Calu3 (cell line): ENCODE measurements at regions of chr3 and their contacts with region 1.

Region 1: GRCh38 chr3:179562591-179563270 is at the start of gene ACTL6A:
- DNase-seq: peak; percentile 100
- H3K4me3 Mint-ChIP-seq: peak within 1 kb of the TSS; percentile 93
- H3K27ac Mint-ChIP-seq: peak within 1 kb of the TSS; percentile 95
- H3K4me1 Mint-ChIP-seq: peaks cover 23% of the 10 kb centered on the region
- H3K27me3 Mint-ChIP-seq: no peaks in the 10 kb centered on the region
- CTCF ChIP-seq: no peak
- total RNA-seq, gene ACTL6A: 148 and 158 TPM in 2 replicates

Region 2: GRCh38 chr3:179015551-179016020 is 547.1 kb before region 1 on chr3:
- CTCF ChIA-PET with region 1: no interaction called
- intact Hi-C with region 1: loop called (anchors 2 kb)
- DNase-seq: peak; percentile 78
- H3K4me3 Mint-ChIP-seq: no peak overlapping the region
- H3K27ac Mint-ChIP-seq: no peak overlapping the region
- H3K4me1 Mint-ChIP-seq: peaks cover 8% of the 10 kb centered on the region
- H3K27me3 Mint-ChIP-seq: no peaks in the 10 kb centered on the region
- CTCF ChIP-seq: peak; percentile 93

Region 3: DNA sequence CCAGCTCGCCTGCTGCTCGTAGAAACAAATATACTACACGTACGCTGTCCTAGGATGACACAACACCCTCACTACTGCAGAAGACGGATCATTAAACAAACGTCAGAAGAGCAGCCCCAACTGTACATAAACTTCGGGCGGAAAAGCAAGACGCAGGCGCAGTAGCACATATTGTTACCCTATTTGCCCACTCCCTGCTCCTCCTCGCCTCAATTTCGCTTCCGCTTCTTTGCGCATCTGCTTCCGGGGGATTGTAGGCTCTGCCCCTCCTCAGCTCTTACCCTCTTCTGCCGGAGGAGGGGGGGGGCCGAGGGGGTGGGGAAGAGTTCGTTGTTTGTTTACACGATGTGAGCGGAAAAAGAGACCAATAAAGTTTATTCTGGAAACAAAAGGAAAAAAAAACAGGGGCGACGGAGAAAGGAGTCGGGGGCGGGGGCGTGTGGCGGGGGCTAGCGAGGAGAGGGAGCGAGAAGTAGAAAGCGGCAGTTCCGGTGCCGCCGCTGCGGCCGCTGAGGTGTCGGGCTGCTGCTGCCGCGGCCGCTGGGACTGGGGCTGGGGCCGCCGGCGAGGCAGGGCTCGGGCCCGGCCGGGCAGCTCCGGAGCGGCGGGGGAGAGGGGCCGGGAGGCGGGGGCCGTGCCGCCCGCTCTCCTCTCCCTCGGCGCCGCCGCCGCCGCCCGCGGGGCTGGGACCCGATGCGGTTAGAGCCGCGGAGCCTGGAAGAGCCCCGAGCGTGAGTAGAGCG is 414.7 kb before region 1 on chr3 and contains the start of gene PIK3CA:
- CTCF ChIA-PET with region 1: no interaction called
- intact Hi-C with region 1: loop called (anchors 5 kb)
- DNase-seq: peak; percentile 95
- H3K4me3 Mint-ChIP-seq: no peak within 1 kb of the TSS
- H3K27ac Mint-ChIP-seq: no peak within 1 kb of the TSS
- H3K4me1 Mint-ChIP-seq: peaks cover 28% of the 10 kb centered on the region
- H3K27me3 Mint-ChIP-seq: no peaks in the 10 kb centered on the region
- CTCF ChIP-seq: no peak
- total RNA-seq, gene PIK3CA: 26.3 and 28.8 TPM in 2 replicates

Region 4: DNA sequence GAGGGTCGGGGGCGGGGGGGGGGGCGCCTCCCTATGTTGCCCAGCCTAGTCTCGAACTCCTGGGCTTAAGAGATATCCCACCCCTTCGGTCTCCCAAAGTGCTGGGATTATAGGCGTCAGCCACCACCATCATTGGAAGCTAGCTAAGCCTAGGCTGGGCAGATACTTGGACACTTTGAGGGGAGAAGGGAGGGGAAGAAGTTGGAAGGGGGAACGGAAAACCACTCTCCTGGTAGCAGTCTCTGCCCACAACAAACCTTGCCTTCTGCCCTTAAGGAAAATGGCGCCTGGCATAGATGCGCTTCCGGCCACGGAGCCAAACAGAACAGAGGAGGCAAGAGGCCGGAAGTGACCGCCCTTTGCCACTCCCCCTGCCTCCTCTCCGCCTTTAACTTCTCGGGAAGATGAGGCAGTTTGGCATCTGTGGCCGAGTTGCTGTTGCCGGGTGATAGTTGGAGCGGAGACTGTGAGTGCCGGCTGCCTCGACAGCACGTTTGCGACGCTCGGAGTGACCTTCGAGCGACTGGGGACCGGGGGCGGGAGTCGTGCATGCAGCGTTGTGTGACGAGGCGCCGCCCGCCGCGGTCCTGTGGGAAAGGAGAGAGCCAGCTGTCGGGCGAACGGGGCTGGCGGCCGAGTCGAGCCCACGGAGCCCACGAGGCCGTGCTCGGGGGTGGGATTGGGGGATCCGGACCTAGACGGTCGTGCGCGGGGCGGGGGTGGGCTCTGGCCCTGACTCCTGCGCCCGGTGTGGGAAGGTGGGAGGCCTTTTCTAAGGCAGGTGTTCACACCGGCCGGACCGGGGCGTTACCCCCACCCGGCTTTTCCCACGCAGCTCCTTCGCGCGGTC is 215.2 kb before region 1 on chr3 and contains the start of gene MFN1:
- CTCF ChIA-PET with region 1: interaction called, 3 read pairs
- intact Hi-C with region 1: loop called (anchors 5 kb)
- DNase-seq: peak; percentile 95
- H3K4me3 Mint-ChIP-seq: peak within 1 kb of the TSS; percentile 99
- H3K27ac Mint-ChIP-seq: peak within 1 kb of the TSS; percentile 96
- H3K4me1 Mint-ChIP-seq: peaks cover 7% of the 10 kb centered on the region
- H3K27me3 Mint-ChIP-seq: no peaks in the 10 kb centered on the region
- CTCF ChIP-seq: no peak
- total RNA-seq, gene MFN1: 79.9 and 86.2 TPM in 2 replicates

Region 5: GRCh38 chr3:179421500-179421899 is 141.2 kb before region 1 on chr3:
- CTCF ChIA-PET with region 1: no interaction called
- intact Hi-C with region 1: loop called (anchors 1 kb)
- DNase-seq: no peak
- H3K4me3 Mint-ChIP-seq: no peak overlapping the region
- H3K27ac Mint-ChIP-seq: no peak overlapping the region
- H3K4me1 Mint-ChIP-seq: no peaks in the 10 kb centered on the region
- H3K27me3 Mint-ChIP-seq: no peaks in the 10 kb centered on the region
- CTCF ChIP-seq: no peak

Region 6: GRCh38 chr3:179544981-179545645 is 17.6 kb before region 1 on chr3:
- CTCF ChIA-PET with region 1: no interaction called
- intact Hi-C with region 1: no loop called
- DNase-seq: no peak
- H3K4me3 Mint-ChIP-seq: no peak overlapping the region
- H3K27ac Mint-ChIP-seq: no peak overlapping the region
- H3K4me1 Mint-ChIP-seq: no peaks in the 10 kb centered on the region
- H3K27me3 Mint-ChIP-seq: peaks cover 16% of the 10 kb centered on the region
- CTCF ChIP-seq: no peak

Region 7: DNA sequence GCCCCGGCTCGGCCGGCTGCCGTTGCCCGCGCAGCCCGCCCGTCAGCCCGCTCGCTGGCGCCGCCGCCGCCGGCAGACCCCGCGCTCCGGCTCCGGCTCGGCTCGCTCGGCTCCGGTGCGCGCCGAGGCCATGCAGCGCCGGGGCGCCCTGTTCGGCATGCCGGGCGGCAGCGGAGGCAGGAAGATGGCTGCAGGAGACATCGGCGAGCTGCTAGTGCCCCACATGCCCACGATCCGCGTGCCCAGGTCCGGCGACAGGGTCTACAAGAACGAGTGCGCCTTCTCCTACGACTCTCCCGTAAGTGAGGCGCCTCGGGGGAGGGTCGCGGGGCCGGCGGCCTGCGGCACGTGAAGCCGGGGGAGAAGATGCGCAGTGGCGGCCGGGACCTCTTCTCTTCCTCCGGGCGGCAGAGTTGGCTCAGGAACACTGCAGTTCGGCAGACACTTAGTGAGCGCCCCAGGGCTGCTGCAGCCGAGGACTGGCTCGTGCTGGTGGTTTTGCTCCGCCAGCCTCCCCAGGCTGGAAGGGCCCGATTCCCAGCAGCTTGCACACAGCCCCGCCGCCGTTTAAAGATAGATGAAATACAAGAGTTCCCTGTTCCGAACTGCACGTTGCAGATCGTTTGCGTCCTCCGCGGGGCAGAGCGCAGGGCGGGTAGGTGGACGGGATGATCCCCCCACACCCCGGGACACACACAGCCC is 90.5 kb after region 1 on chr3:
- CTCF ChIA-PET with region 1: interaction called, 10 read pairs
- intact Hi-C with region 1: no loop called
- DNase-seq: peak; percentile 72
- H3K4me3 Mint-ChIP-seq: peak overlapping the region; percentile 84
- H3K27ac Mint-ChIP-seq: peak overlapping the region; percentile 61
- H3K4me1 Mint-ChIP-seq: peaks cover 40% of the 10 kb centered on the region
- H3K27me3 Mint-ChIP-seq: no peaks in the 10 kb centered on the region
- CTCF ChIP-seq: no peak